Prostate gland (tissue), 2 donors: ENCODE measurements at regions of chr9 and their contacts with region 1.

Region 1: GRCh38 chr9:115035841-115036612 is 81.9 kb downstream of the TNC start:
- DNase-seq: no peak
- H3K4me3 ChIP-seq: no peak overlapping the region
- H3K27ac ChIP-seq: no peak overlapping the region
- H3K4me1 ChIP-seq: no peaks in the 10 kb centered on the region
- H3K27me3 ChIP-seq: no peaks in the 10 kb centered on the region
- CTCF ChIP-seq: no peak
- POLR2A ChIP-seq: no peak

Region 2: DNA sequence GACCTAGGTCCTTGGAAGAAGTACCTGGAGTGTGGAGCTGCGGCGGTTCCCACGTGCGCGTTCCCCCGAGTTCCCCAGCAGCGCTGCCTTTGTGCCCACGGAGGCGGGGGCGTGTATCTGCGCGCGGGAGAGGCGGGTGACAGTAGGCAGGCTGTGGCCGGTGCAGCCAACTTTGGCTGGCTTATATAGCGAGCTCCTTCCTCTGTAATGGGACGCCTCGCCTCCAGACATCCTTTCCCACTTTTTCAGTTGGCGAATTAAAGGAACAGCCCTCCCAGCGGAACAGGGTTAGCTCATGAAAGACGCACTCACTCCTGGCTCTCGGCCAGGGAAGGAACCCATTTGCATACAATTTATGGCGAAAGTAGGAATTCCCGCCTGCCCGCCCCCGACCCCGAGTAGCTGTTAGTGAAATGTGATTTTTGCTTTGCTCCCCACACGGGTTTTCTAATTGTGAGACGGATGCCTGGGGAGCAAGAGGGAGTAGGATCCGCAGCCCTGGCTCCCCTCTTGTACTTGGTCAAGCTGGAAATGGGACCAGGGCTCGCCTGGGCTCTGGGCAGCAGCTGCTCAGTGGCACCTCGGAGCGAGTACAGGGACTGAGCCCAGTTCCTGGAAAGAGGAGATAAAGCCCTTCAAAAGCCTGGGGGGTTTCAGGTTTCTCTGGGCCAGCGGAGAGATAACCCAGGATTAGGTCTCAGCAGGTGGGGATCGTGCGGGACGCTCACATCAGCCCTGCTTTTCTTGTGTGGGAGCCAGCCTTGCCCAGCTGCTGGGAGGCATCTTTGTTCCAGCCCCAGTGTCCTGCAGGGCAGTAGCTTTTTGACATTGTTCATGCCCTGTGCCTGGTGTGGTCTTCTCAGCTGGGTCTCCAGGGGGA is 82.2 kb after region 1 on chr9 and contains the start of gene TNC:
- intact Hi-C with region 1: no loop called
- DNase-seq: peak; percentile 38
- H3K4me3 ChIP-seq: peak within 1 kb of the TSS; percentile 13 to 33
- H3K27ac ChIP-seq: peak within 1 kb of the TSS; percentile 52 to 66
- H3K4me1 ChIP-seq: no peaks in the 10 kb centered on the region
- H3K27me3 ChIP-seq: no peaks in the 10 kb centered on the region
- CTCF ChIP-seq: no peak
- POLR2A ChIP-seq: peak; percentile 33
- total RNA-seq, gene TNC: 35.4 to 92.5 TPM

Region 3: DNA sequence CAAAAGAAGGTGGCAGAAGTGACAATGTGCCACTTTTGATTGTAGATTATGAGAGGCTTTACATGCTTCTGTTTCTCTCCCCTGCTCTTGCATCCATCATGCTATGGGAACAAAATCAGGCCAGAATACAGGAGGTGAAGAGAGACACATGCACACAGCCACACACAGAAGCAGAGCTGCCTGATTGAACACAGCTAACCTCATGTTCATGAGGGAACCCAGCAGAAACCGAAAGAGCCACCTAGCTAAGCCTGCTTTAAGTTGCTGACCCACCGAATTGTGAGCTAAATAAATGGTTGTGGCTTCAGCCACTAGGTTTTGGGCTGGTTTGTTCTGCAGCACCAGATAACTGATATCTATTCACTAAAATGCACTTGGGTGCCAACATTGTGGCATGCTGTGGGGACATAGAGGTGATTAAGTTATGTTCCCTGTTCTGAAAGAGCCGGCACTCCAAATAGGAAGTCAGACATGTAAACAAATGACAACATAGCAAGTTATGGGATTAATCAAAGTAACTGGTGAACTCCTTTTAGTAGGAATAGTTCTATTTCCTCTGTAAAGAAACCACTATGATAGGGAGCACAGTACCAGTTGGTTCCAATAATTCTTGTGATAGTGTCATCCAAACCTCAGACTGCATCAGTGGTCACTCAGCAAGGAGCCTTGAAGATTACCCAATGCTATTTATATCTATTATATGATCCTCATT is 175.5 kb after region 1 on chr9:
- intact Hi-C with region 1: loop called (anchors 10 kb)
- DNase-seq: no peak
- H3K4me3 ChIP-seq: no peak overlapping the region
- H3K27ac ChIP-seq: no peak overlapping the region
- H3K4me1 ChIP-seq: no peaks in the 10 kb centered on the region
- H3K27me3 ChIP-seq: no peaks in the 10 kb centered on the region
- CTCF ChIP-seq: no peak
- POLR2A ChIP-seq: no peak

Region 4: GRCh38 chr9:116219686-116220085 is 1183.7 kb after region 1 on chr9:
- intact Hi-C with region 1: no loop called
- DNase-seq: no peak
- H3K4me3 ChIP-seq: no peak overlapping the region
- H3K27ac ChIP-seq: no peak overlapping the region
- H3K4me1 ChIP-seq: no peaks in the 10 kb centered on the region
- H3K27me3 ChIP-seq: no peaks in the 10 kb centered on the region
- CTCF ChIP-seq: no peak
- POLR2A ChIP-seq: no peak